ENCODE measurements at regions of chr2 and their contacts with region 1.

Region 1: GRCh38 chr2:106638043-106638442 is 150.9 kb downstream of the CD8B2 start:
- DNase-seq: no peak
- ATAC-seq: no peak
- H3K4me3 ChIP-seq: no peak overlapping the region
- H3K27ac ChIP-seq: no peak overlapping the region
- H3K4me1 ChIP-seq: no peaks in the 10 kb centered on the region
- H3K27me3 ChIP-seq: no peaks in the 10 kb centered on the region

Region 2: GRCh38 chr2:106537047-106537446 is 101.0 kb before region 1 on chr2:
- intact Hi-C with region 1: no loop called
- DNase-seq: no peak
- ATAC-seq: peak; percentile 50 to 67
- H3K4me3 ChIP-seq: no peak overlapping the region
- H3K27ac ChIP-seq: no peak overlapping the region
- H3K4me1 ChIP-seq: no peaks in the 10 kb centered on the region
- H3K27me3 ChIP-seq: no peaks in the 10 kb centered on the region

Region 3: GRCh38 chr2:107627164-107627563 is 989.1 kb after region 1 on chr2:
- intact Hi-C with region 1: loop called in 1 of 4 experiments (anchors 5 kb)
- DNase-seq: no peak
- ATAC-seq: no peak
- H3K4me3 ChIP-seq: no peak overlapping the region
- H3K27ac ChIP-seq: no peak overlapping the region
- H3K4me1 ChIP-seq: no peaks in the 10 kb centered on the region
- H3K27me3 ChIP-seq: no peaks in the 10 kb centered on the region

Measured in right cardiac atrium (tissue), 5 donors.